ENCODE measurements at regions of chr5 and their contacts with region 1.

Region 1: GRCh38 chr5:42087541-42087940 is 162.5 kb downstream of the FBXO4 start:
- DNase-seq: no peak
- H3K4me3 ChIP-seq: no peak overlapping the region
- H3K27ac ChIP-seq: no peak overlapping the region
- H3K4me1 ChIP-seq: no peaks in the 10 kb centered on the region
- H3K27me3 ChIP-seq: no peaks in the 10 kb centered on the region
- CTCF ChIP-seq: no peak

Region 2: GRCh38 chr5:42131081-42131480 is 43.5 kb after region 1 on chr5:
- intact Hi-C with region 1: loop called (anchors 2 kb)
- DNase-seq: no peak
- H3K4me3 ChIP-seq: no peak overlapping the region
- H3K27ac ChIP-seq: no peak overlapping the region
- H3K4me1 ChIP-seq: no peaks in the 10 kb centered on the region
- H3K27me3 ChIP-seq: no peaks in the 10 kb centered on the region
- CTCF ChIP-seq: no peak

Measured in left ventricle myocardium inferior (tissue), 1 donor.